GM13976 (cell line): ENCODE measurements at regions of chr13 and their contacts with region 1.

Region 1: GRCh38 chr13:43786773-43787517 is at the start of gene ENOX1:
- DNase-seq: peak; percentile 71
- CTCF ChIP-seq: no peak

Region 2: GRCh38 chr13:42969558-42970172 is 817.3 kb before region 1 on chr13:
- in situ Hi-C with region 1: loop called (anchors 25 kb)
- DNase-seq: peak; percentile 69
- CTCF ChIP-seq: peak; percentile 81

Region 3: DNA sequence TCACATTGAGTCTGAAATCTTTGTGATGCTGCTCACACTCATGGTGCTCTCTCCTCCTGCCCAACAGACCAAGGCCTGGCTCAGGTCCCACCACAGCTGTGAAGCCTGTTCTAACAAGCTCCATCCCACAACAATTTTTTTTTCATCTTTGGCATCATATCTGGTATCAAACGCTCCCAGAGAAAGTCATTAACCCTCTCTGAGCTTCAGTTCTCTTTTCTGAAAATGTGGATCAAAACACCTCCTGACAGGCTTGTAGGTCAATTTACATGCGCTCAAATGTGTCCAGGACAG is 317.2 kb after region 1 on chr13:
- in situ Hi-C with region 1: no loop called
- DNase-seq: no peak
- CTCF ChIP-seq: no peak